ENCODE measurements at regions of chr13 and their contacts with region 1.

Region 1: GRCh38 chr13:62626771-62627170 is 1211.1 kb upstream of the PCDH20 start:
- DNase-seq: no peak
- H3K4me3 Mint-ChIP-seq: no peak overlapping the region
- H3K27ac Mint-ChIP-seq: no peak overlapping the region
- H3K4me1 Mint-ChIP-seq: no peaks in the 10 kb centered on the region
- H3K27me3 Mint-ChIP-seq: no peaks in the 10 kb centered on the region

Region 2: GRCh38 chr13:62663767-62664166 is 37.0 kb after region 1 on chr13:
- intact Hi-C with region 1: loop called (anchors 1 kb)
- DNase-seq: no peak
- H3K4me3 Mint-ChIP-seq: no peak overlapping the region
- H3K27ac Mint-ChIP-seq: no peak overlapping the region
- H3K4me1 Mint-ChIP-seq: no peaks in the 10 kb centered on the region
- H3K27me3 Mint-ChIP-seq: no peaks in the 10 kb centered on the region